ENCODE measurements at regions of chr3 and their contacts with region 1.

Region 1: DNA sequence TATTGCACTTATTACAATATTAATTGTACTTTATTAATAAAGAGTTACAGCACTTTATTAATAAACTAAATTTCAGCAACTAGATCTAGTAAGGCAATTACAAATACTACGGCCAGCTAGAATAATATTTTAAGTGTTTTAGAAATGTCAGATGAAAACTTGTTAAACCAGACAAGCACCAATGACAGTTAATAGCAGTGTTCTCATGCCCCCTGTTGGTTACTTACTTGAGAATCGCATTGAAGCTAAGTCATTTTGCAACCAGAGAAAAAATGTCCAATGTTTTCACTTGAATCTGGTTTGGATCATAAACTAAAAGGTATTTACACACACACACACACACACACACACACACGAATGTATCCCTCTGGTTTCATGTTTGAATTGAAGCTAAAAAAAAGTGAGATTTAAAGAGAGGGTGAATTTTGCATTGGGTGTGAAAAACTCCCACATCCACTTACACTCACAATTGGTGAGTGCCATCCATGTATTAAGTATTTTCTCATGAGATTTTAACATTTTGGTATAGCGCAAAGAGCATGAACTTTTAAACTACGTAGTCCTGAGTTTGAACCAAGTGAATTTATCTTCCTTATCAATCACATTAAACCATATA is 347.7 kb downstream of the ZBBX start:
- DNase-seq: peak; percentile 57
- ATAC-seq: peak; percentile 46; the same call in 1 of the 3 replicates
- H3K4me3 ChIP-seq: no peak overlapping the region
- H3K27ac ChIP-seq: no peak overlapping the region
- H3K4me1 ChIP-seq: no peaks in the 10 kb centered on the region
- H3K27me3 ChIP-seq: no peaks in the 10 kb centered on the region
- CTCF ChIP-seq: peak; percentile 72
- EP300 ChIP-seq: no peak
- POLR2A ChIP-seq: no peak
- RAD21 ChIP-seq: peak; percentile 43

Region 2: DNA sequence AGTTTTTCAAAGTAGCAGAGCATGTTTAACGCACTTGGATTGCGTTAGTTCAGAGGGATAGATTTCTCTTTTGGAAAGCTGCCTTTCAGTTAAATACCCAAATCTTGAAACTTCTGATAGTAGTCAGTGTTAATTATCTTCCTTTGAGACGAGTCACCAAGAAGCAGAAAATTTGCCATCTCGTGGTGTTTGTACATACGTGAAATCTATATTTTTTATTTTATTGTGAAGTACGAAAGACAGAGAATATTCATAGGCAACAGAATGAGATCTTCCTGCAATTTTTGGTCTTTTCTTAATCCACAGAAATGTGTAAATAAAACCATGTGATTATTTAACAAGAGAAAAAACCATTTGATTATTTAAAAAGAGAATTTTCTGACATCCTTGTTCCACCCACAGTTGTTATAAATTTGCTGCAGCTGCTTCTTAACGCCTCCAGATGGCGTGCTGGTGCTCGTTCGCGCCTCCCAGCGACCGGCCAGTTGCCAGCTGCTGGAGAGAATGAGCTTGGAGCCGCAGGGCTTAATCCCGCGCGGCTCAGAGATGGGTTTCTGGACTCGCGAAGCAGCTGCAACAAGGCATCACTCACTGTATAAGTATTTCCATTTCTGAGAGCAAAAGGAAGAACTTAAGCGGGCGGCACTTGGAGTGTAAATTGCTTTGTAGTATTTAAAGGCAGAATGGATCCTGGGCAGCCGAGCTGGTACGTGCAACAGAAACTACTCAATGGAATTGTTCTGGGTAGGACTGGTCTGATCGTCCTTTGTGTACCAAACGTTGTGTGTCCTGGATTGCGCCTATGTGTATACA is 1825.7 kb before region 1 on chr3:
- CTCF ChIA-PET with region 1: no interaction called
- POLR2A ChIA-PET with region 1: no interaction called
- in situ Hi-C with region 1: no loop called
- intact Hi-C with region 1: loop called (anchors 5 kb)
- DNase-seq: peak; percentile 64
- ATAC-seq: peak; percentile 98
- H3K4me3 ChIP-seq: peak overlapping the region in 1 of 3 experiments; percentile 30; a peak in 1 of 6 replicates
- H3K27ac ChIP-seq: no peak overlapping the region
- H3K4me1 ChIP-seq: peaks cover 16% of the 10 kb centered on the region
- H3K27me3 ChIP-seq: no peaks in the 10 kb centered on the region
- CTCF ChIP-seq: peak; percentile 85
- EP300 ChIP-seq: no peak
- POLR2A ChIP-seq: no peak
- RAD21 ChIP-seq: peak; percentile 70

Region 3: DNA sequence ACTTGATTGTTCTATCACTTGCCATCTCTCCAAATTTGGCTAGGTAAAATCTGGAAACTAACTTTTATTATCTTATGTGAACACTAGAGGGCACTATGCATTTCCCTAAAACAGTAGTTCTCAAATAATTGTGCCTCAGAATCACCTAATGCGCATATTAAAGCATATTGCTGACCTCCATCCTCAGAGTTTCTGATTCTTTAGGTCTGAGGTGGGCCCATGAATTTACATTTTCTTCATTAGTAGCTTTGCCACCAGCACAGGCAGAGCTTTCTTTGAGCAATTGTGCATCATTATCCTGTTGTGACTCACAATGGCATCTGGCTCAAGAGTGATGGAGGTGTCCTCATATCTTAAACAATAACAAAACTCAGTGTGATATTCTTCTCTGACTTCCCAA is 1177.7 kb before region 1 on chr3:
- CTCF ChIA-PET with region 1: interaction called, 8 read pairs
- POLR2A ChIA-PET with region 1: no interaction called
- in situ Hi-C with region 1: loop called (anchors 25 kb)
- intact Hi-C with region 1: loop called (anchors 1 kb)
- DNase-seq: peak; percentile 1
- ATAC-seq: no peak
- H3K4me3 ChIP-seq: no peak overlapping the region
- H3K27ac ChIP-seq: no peak overlapping the region
- H3K4me1 ChIP-seq: no peaks in the 10 kb centered on the region
- H3K27me3 ChIP-seq: no peaks in the 10 kb centered on the region
- CTCF ChIP-seq: peak; percentile 57
- EP300 ChIP-seq: no peak
- POLR2A ChIP-seq: no peak
- RAD21 ChIP-seq: no peak

Region 4: GRCh38 chr3:166013073-166013679 is 1019.2 kb before region 1 on chr3:
- CTCF ChIA-PET with region 1: interaction called, 13 read pairs
- POLR2A ChIA-PET with region 1: no interaction called
- in situ Hi-C with region 1: loop called (anchors 25 kb)
- intact Hi-C with region 1: no loop called
- DNase-seq: peak; percentile 39
- ATAC-seq: no peak
- H3K4me3 ChIP-seq: no peak overlapping the region
- H3K27ac ChIP-seq: no peak overlapping the region
- H3K4me1 ChIP-seq: no peaks in the 10 kb centered on the region
- H3K27me3 ChIP-seq: no peaks in the 10 kb centered on the region
- CTCF ChIP-seq: peak; percentile 47
- EP300 ChIP-seq: no peak
- POLR2A ChIP-seq: no peak
- RAD21 ChIP-seq: no peak

Region 5: DNA sequence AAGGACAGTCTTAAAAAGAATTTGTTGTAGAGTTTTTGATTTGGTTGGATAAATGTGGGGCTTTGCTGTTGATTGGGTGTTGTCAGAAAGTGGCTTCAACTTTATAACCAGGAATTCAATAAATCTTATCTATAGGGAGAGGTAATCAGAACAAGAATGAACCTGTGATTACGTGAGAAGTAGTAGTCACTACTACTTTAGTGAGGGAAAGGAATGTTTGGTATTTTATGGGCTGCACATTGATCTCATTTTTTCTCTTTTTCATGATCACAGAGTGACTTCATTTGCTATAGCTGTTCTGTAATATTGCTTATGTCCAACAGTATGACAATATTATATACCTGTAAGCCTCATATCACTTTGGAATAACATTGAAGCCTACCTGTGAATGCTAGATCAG is 710.0 kb before region 1 on chr3:
- CTCF ChIA-PET with region 1: no interaction called
- POLR2A ChIA-PET with region 1: no interaction called
- in situ Hi-C with region 1: no loop called
- intact Hi-C with region 1: loop called (anchors 5 kb)
- DNase-seq: no peak
- ATAC-seq: no peak
- H3K4me3 ChIP-seq: no peak overlapping the region
- H3K27ac ChIP-seq: no peak overlapping the region
- H3K4me1 ChIP-seq: no peaks in the 10 kb centered on the region
- H3K27me3 ChIP-seq: no peaks in the 10 kb centered on the region; a peak in 1 of 5 replicates
- CTCF ChIP-seq: no peak
- EP300 ChIP-seq: no peak
- POLR2A ChIP-seq: no peak
- RAD21 ChIP-seq: no peak

Region 6: DNA sequence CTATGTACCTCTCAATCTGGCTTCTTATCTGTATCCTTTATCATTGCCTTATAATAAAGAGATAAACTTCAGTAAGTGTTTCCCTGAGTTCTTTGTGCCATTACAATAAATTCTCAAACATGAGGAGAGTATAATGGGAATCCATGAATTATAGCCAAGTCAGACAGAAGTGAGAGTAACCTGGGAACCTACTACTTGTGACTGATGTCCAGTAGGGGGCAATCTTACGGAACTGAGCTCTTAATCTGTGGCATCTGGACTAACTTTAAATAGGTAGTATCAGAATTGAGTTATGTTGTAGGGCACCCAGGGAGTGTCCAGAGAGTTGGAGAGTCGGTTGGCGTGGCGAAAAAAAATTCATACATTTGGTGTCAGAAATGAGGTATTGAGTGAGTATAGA is 194.8 kb before region 1 on chr3:
- CTCF ChIA-PET with region 1: no interaction called
- POLR2A ChIA-PET with region 1: no interaction called
- in situ Hi-C with region 1: loop called (anchors 10 kb)
- intact Hi-C with region 1: loop called (anchors 5 kb)
- DNase-seq: peak; percentile 32
- ATAC-seq: peak; percentile 95
- H3K4me3 ChIP-seq: no peak overlapping the region
- H3K27ac ChIP-seq: no peak overlapping the region
- H3K4me1 ChIP-seq: no peaks in the 10 kb centered on the region
- H3K27me3 ChIP-seq: no peaks in the 10 kb centered on the region
- CTCF ChIP-seq: peak; percentile 61
- EP300 ChIP-seq: no peak
- POLR2A ChIP-seq: no peak
- RAD21 ChIP-seq: no peak

Region 7: GRCh38 chr3:166844329-166844728 is 188.0 kb before region 1 on chr3:
- CTCF ChIA-PET with region 1: no interaction called
- POLR2A ChIA-PET with region 1: no interaction called
- in situ Hi-C with region 1: loop called (anchors 10 kb)
- intact Hi-C with region 1: loop called (anchors 5 kb)
- DNase-seq: no peak
- ATAC-seq: no peak
- H3K4me3 ChIP-seq: no peak overlapping the region
- H3K27ac ChIP-seq: no peak overlapping the region
- H3K4me1 ChIP-seq: no peaks in the 10 kb centered on the region
- H3K27me3 ChIP-seq: no peaks in the 10 kb centered on the region; a peak in 1 of 5 replicates
- CTCF ChIP-seq: no peak
- EP300 ChIP-seq: no peak
- POLR2A ChIP-seq: no peak
- RAD21 ChIP-seq: no peak